B cell (primary cell): ENCODE measurements at regions of chr15 and their contacts with region 1.

Region 1: GRCh38 chr15:78872972-78873792 is 492 bp downstream of the MORF4L1 start:
- DNase-seq: peak; percentile 94
- ATAC-seq: peak; percentile 73
- H3K4me3 ChIP-seq: peak overlapping the region; percentile 82 to 100 (median 100)
- H3K4me3 Mint-ChIP-seq: peak overlapping the region; percentile 97
- H3K27ac ChIP-seq: peak overlapping the region; percentile 95 to 100
- H3K27ac Mint-ChIP-seq: peak overlapping the region; percentile 100
- H3K4me1 ChIP-seq: peaks cover 29 to 47% of the 10 kb centered on the region in 2 donors
- H3K4me1 Mint-ChIP-seq: peaks cover 44% of the 10 kb centered on the region
- H3K27me3 ChIP-seq: no peaks in the 10 kb centered on the region
- H3K27me3 Mint-ChIP-seq: no peaks in the 10 kb centered on the region
- CTCF ChIP-seq: peak; percentile 46

Region 2: GRCh38 chr15:78437762-78438302 is 435.4 kb before region 1 on chr15 and contains the start of gene IREB2:
- CTCF ChIA-PET with region 1: no interaction called
- POLR2A ChIA-PET with region 1: interaction called, 7 read pairs
- intact Hi-C with region 1: loop called (anchors 5 kb)
- DNase-seq: peak; percentile 99
- ATAC-seq: peak; percentile 91
- H3K4me3 ChIP-seq: peak within 1 kb of the TSS; percentile 71 to 98 (median 96)
- H3K4me3 Mint-ChIP-seq: peak within 1 kb of the TSS; percentile 99
- H3K27ac ChIP-seq: peak within 1 kb of the TSS; percentile 83 to 95
- H3K27ac Mint-ChIP-seq: peak within 1 kb of the TSS; percentile 98
- H3K4me1 ChIP-seq: peaks cover 17 to 21% of the 10 kb centered on the region in 2 donors
- H3K4me1 Mint-ChIP-seq: peaks cover 37% of the 10 kb centered on the region
- H3K27me3 ChIP-seq: no peaks in the 10 kb centered on the region
- H3K27me3 Mint-ChIP-seq: peaks cover 7% of the 10 kb centered on the region
- CTCF ChIP-seq: no peak
- total RNA-seq, gene IREB2: 88.4 and 92.1 TPM in 2 replicates

Region 3: DNA sequence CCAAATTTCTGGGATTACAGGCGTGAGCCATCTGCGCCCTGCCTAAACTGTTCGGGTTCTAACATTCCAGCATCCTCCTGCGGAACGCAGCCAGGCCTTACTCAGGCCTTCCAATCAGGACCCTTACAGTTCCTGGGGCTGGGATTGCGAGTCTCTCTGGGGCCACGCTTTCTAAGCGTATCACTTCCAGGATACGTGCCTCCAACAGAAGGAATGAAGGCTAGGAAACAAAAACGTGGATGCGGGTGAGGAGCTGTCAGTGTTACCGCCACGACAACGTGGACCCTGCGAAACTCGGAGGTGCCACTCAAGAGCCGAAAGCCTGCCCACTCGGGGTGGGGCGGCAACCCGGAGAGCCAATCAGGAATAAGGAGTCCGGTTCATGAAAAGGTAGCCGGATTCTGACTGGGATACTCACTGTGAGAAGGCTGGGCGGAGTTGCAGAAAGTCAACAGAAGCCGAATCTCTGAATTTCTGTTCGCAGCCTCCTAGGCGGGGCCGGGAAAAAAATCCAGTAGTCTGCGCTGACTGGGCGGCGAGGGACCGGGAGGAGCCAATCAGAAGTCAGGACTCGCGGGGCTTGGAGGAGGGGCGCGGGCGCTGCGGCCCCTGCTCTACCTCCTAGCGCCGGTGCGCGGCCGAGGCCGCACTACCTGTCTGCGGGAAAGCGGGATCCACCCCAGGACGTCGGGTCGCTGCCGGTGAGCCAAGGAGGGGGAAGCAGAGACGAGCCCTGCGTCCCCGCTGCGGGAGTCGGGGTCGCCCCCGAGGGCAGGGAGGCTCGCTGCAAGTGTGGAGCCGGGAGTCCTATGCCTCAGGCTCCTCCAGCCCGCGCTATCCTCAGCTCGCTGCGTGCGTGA is 366.0 kb before region 1 on chr15 and contains the start of gene HYKK:
- CTCF ChIA-PET with region 1: no interaction called
- POLR2A ChIA-PET with region 1: no interaction called
- intact Hi-C with region 1: no loop called
- DNase-seq: peak; percentile 63
- ATAC-seq: peak; percentile 80
- H3K4me3 ChIP-seq: peak within 1 kb of the TSS; percentile 60 to 96 (median 70)
- H3K4me3 Mint-ChIP-seq: peak within 1 kb of the TSS; percentile 90
- H3K27ac ChIP-seq: no peak within 1 kb of the TSS
- H3K27ac Mint-ChIP-seq: peak within 1 kb of the TSS; percentile 41
- H3K4me1 ChIP-seq: peaks cover 10 to 14% of the 10 kb centered on the region in 2 donors
- H3K4me1 Mint-ChIP-seq: peaks cover 16% of the 10 kb centered on the region
- H3K27me3 ChIP-seq: peaks cover 0 to 18% (median 6%) of the 10 kb centered on the region in 4 experiments
- H3K27me3 Mint-ChIP-seq: peaks cover 20% of the 10 kb centered on the region
- CTCF ChIP-seq: no peak
- total RNA-seq, gene HYKK: 0.42 and 0.46 TPM in 2 replicates

Region 4: DNA sequence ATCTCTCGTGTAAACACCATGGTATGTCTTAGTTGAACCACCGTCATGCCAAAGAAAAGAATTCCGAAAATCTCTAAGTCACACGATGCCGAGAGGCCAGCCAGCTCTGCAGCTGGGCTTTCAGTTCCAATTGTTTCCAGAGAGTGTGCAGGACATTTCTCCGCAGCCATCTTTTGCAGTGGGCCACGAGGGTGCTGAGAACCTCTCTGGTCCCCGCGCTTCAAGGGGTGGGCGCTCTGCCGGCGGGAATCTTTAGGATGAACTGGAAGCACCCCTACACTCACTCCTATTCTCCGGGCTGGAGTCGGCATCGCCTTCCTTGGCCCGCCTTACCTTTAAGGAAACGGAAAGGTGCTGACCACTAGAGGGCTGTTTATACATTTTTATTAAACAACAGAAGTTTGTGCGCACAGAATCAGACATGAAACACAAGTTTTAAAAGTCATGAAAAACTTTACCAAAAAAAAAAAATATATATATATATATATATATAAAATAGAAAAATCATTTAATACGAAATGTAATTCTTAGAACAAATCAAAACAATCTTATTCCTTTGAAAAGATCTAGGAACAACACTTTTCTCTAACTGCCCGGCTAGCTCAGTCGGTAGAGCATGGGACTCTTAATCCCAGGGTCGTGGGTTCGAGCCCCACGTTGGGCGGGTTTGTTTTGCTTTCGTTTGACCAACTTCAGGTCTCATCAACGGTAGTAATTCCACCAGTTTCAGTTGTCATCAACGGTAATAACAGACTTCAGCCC is 13.0 kb before region 1 on chr15:
- CTCF ChIA-PET with region 1: interaction called, 40 read pairs
- POLR2A ChIA-PET with region 1: interaction called, 13 read pairs
- intact Hi-C with region 1: loop called (anchors 1 kb)
- DNase-seq: peak; percentile 82
- ATAC-seq: peak; percentile 81
- H3K4me3 ChIP-seq: peak overlapping the region; percentile 25 to 81 (median 53)
- H3K4me3 Mint-ChIP-seq: peak overlapping the region; percentile 81
- H3K27ac ChIP-seq: no peak overlapping the region
- H3K27ac Mint-ChIP-seq: peak overlapping the region; percentile 92
- H3K4me1 ChIP-seq: peaks cover 3 to 7% of the 10 kb centered on the region in 2 donors
- H3K4me1 Mint-ChIP-seq: peaks cover 7% of the 10 kb centered on the region
- H3K27me3 ChIP-seq: no peaks in the 10 kb centered on the region
- H3K27me3 Mint-ChIP-seq: no peaks in the 10 kb centered on the region
- CTCF ChIP-seq: peak; percentile 77

Region 5: GRCh38 chr15:78938658-78939488 is 65.7 kb after region 1 on chr15:
- CTCF ChIA-PET with region 1: no interaction called
- POLR2A ChIA-PET with region 1: interaction called, 7 read pairs
- intact Hi-C with region 1: loop called (anchors 2 kb)
- DNase-seq: peak; percentile 86
- ATAC-seq: peak; percentile 82
- H3K4me3 ChIP-seq: peak overlapping the region in 3 of 5 experiments; percentile 34 to 42 (median 35)
- H3K4me3 Mint-ChIP-seq: peak overlapping the region; percentile 73
- H3K27ac ChIP-seq: peak overlapping the region; percentile 84 to 86
- H3K27ac Mint-ChIP-seq: peak overlapping the region; percentile 91
- H3K4me1 ChIP-seq: peaks cover 68 to 81% of the 10 kb centered on the region in 2 donors
- H3K4me1 Mint-ChIP-seq: peaks cover 65% of the 10 kb centered on the region
- H3K27me3 ChIP-seq: no peaks in the 10 kb centered on the region
- H3K27me3 Mint-ChIP-seq: no peaks in the 10 kb centered on the region
- CTCF ChIP-seq: no peak

Region 6: GRCh38 chr15:79101866-79102578 is 228.8 kb after region 1 on chr15:
- CTCF ChIA-PET with region 1: interaction called, 4 read pairs
- POLR2A ChIA-PET with region 1: interaction called, 10 read pairs
- intact Hi-C with region 1: no loop called
- DNase-seq: no peak
- ATAC-seq: no peak
- H3K4me3 ChIP-seq: no peak overlapping the region
- H3K4me3 Mint-ChIP-seq: no peak overlapping the region
- H3K27ac ChIP-seq: no peak overlapping the region
- H3K27ac Mint-ChIP-seq: no peak overlapping the region
- H3K4me1 ChIP-seq: peaks cover 5% of the 10 kb centered on the region in 2 donors
- H3K4me1 Mint-ChIP-seq: peaks cover 8% of the 10 kb centered on the region
- H3K27me3 ChIP-seq: peaks cover 0 to 9% (median 4%) of the 10 kb centered on the region in 4 experiments
- H3K27me3 Mint-ChIP-seq: peaks cover 44% of the 10 kb centered on the region
- CTCF ChIP-seq: no peak